Activated CD4-positive, alpha-beta memory T cell treated with anti-CD3 and anti-CD28 coated beads for 36 hours (primary cell): ENCODE measurements at regions of chr15 and their contacts with region 1.

Region 1: GRCh38 chr15:65862682-65863081 is 6.6 kb upstream of the RAB11A start:
- DNase-seq: peak; percentile 84
- H3K4me3 Mint-ChIP-seq: peak overlapping the region; percentile 29
- H3K27ac Mint-ChIP-seq: no peak overlapping the region
- H3K4me1 Mint-ChIP-seq: peaks cover 10% of the 10 kb centered on the region
- H3K27me3 Mint-ChIP-seq: no peaks in the 10 kb centered on the region

Region 2: GRCh38 chr15:65610871-65611718 is 251.6 kb before region 1 on chr15 and contains the start of gene INTS14:
- CTCF ChIA-PET with region 1: interaction called, 12 read pairs
- POLR2A ChIA-PET with region 1: no interaction called
- intact Hi-C with region 1: no loop called
- DNase-seq: peak; percentile 97
- H3K4me3 Mint-ChIP-seq: peak within 1 kb of the TSS; percentile 97
- H3K27ac Mint-ChIP-seq: peak within 1 kb of the TSS; percentile 97
- H3K4me1 Mint-ChIP-seq: peaks cover 27% of the 10 kb centered on the region
- H3K27me3 Mint-ChIP-seq: no peaks in the 10 kb centered on the region
- total RNA-seq, gene INTS14: 42.5 to 42.7 TPM

Region 3: DNA sequence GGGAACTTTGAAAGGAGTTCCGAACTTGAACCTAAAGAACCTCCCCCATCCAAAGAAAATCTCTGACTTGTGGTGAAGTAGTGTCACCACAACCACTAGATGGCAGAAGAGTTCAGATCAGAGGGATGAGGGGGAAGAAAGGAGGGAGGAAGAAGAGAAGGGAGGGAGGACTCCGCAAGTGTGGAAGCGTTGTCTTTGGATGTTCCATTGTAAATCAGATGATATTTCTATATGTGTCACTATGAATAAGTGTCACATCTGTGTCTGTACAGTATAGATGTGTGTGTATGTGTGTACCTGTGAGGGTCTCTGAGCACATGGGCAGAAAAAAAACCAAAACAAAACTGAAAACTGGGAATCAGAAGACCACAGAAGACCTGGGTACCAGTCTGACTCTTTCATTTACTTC is 224.0 kb before region 1 on chr15:
- CTCF ChIA-PET with region 1: interaction called, 38 read pairs
- POLR2A ChIA-PET with region 1: no interaction called
- intact Hi-C with region 1: loop called (anchors 1 kb)
- DNase-seq: peak; percentile 33
- H3K4me3 Mint-ChIP-seq: no peak overlapping the region
- H3K27ac Mint-ChIP-seq: no peak overlapping the region
- H3K4me1 Mint-ChIP-seq: peaks cover 6% of the 10 kb centered on the region
- H3K27me3 Mint-ChIP-seq: no peaks in the 10 kb centered on the region

Region 4: GRCh38 chr15:65690778-65691177 is 171.9 kb before region 1 on chr15:
- CTCF ChIA-PET with region 1: no interaction called
- POLR2A ChIA-PET with region 1: no interaction called
- intact Hi-C with region 1: no loop called
- DNase-seq: no peak
- H3K4me3 Mint-ChIP-seq: no peak overlapping the region
- H3K27ac Mint-ChIP-seq: no peak overlapping the region
- H3K4me1 Mint-ChIP-seq: no peaks in the 10 kb centered on the region
- H3K27me3 Mint-ChIP-seq: no peaks in the 10 kb centered on the region

Region 5: DNA sequence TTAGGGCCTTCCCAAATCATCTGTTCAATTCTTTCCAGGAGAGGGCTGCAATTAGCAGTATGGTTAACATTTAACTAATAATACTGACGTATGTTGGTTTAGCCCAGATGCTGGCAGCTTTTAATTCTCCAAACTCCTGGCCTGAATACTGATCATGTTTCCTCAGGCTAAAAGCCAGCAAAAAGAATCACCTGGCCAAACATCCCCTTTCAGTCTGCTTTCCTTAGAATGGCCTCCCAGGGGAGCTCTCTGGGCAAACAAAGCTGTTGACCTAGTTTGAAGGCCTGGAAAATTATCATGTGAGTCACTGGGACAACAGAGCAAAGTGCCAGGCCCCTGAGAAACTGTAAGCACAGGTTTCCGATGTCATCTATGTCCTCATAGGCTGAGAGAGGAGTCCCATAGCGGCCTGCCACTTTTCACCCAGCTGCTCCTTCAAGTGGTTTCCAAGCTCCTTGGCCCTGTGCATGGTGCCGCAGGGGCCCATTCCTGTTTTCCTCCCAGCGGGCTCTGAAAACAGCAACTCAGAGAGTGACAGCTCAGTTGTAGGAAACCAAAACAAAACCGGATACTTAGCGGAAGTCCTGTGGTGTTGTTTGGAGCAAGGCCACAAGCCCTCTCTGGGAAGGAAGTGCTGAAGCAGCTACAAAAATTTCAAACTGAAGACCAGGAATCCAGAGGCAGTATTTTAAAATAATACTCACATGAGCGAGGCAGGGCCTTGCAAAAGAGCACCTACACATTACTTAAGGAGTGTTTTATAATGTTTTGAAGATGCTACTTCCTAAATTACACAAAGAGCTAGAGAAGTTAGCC is 29.9 kb before region 1 on chr15:
- CTCF ChIA-PET with region 1: interaction called, 25 read pairs
- POLR2A ChIA-PET with region 1: no interaction called
- intact Hi-C with region 1: loop called (anchors 2 kb)
- DNase-seq: peak; percentile 72
- H3K4me3 Mint-ChIP-seq: peak overlapping the region; percentile 68
- H3K27ac Mint-ChIP-seq: peak overlapping the region; percentile 94
- H3K4me1 Mint-ChIP-seq: peaks cover 45% of the 10 kb centered on the region
- H3K27me3 Mint-ChIP-seq: no peaks in the 10 kb centered on the region

Region 6: DNA sequence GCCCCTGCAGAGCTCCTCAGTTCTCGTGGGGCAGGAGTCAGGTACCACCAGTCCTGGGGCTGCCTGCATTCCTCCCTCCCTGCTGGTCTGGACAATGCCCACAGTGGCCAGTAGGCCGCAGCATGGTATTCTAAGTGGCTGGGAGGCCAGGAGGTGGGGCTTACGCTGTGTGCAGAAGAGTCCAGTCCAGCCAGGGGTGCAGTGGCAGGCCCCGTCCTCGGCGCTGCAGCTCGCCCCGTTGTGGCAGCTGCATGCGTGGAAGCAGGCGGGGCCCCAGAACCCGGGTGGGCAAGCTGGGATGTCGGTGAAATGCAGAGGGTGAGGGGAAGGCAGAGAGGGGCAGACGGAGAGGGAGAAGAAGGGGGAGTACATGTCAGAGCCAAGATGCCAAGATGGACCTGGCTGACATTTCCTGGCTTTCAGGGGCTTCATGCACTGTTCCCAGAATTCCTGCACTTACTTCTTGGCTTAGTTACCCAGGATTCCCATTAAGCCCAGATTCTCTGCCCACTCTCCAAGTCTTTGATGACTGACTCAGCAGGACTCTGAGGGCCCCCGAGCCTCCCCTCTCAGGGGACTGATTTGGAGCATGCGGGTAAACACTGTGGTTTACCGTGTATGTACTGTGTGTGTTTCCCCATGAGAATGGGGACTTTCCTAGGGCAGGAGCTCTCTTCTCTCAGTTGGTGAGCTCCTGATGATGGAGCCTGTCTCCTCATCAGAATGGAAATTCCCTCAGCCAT is 54.2 kb after region 1 on chr15:
- CTCF ChIA-PET with region 1: interaction called, 3 read pairs
- POLR2A ChIA-PET with region 1: no interaction called
- intact Hi-C with region 1: loop called (anchors 1 kb)
- DNase-seq: peak; percentile 72
- H3K4me3 Mint-ChIP-seq: no peak overlapping the region
- H3K27ac Mint-ChIP-seq: peak overlapping the region; percentile 21
- H3K4me1 Mint-ChIP-seq: peaks cover 32% of the 10 kb centered on the region
- H3K27me3 Mint-ChIP-seq: no peaks in the 10 kb centered on the region

Region 7: GRCh38 chr15:66193066-66193465 is 330.4 kb after region 1 on chr15:
- CTCF ChIA-PET with region 1: no interaction called
- POLR2A ChIA-PET with region 1: no interaction called
- intact Hi-C with region 1: loop called (anchors 5 kb)
- DNase-seq: no peak
- H3K4me3 Mint-ChIP-seq: no peak overlapping the region
- H3K27ac Mint-ChIP-seq: no peak overlapping the region
- H3K4me1 Mint-ChIP-seq: peaks cover 3% of the 10 kb centered on the region
- H3K27me3 Mint-ChIP-seq: peaks cover 2% of the 10 kb centered on the region